ENCODE measurements at regions of chr1 and their contacts with region 1.

Region 1: DNA sequence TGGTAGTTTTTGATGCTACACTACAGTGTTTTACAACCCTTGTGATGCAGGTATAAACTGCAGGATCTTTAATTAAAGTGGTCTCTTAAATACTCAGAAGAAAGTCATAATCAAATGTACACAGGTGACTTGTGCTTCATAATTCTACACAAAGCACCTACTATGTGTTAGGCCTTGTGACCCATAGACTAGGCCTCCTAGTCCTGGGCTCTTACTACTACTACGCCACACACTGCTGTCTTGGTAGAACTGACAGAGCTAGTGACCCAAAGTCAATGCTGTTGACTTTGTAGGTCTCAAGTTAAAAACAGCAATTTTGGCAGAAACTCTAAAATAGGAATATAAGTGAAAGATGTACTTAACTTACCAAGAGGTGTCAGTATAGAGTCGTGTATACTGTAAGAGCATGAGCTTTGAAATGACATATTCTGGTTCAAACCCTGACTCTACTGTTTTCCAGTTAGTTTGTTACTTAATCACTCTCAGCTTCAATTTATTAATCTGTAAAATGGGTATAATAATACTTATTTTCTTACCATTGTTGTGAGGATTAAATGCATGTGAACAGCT is 48.6 kb upstream of the LMO4 start:
- DNase-seq: peak; percentile 45
- ATAC-seq: peak; percentile 37; the same call in 1 of the 2 replicates
- H3K4me3 ChIP-seq: no peak overlapping the region
- H3K27ac ChIP-seq: no peak overlapping the region
- H3K4me1 ChIP-seq: no peaks in the 10 kb centered on the region
- H3K27me3 ChIP-seq: no peaks in the 10 kb centered on the region
- CTCF ChIP-seq: peak; percentile 61

Region 2: GRCh38 chr1:87131809-87132283 is 148.2 kb before region 1 on chr1:
- CTCF ChIA-PET with region 1: no interaction called
- POLR2A ChIA-PET with region 1: no interaction called
- intact Hi-C with region 1: loop called (anchors 5 kb)
- DNase-seq: peak; percentile 79
- ATAC-seq: peak; percentile 99
- H3K4me3 ChIP-seq: peak overlapping the region; percentile 64
- H3K27ac ChIP-seq: no peak overlapping the region
- H3K4me1 ChIP-seq: no peaks in the 10 kb centered on the region
- H3K27me3 ChIP-seq: no peaks in the 10 kb centered on the region
- CTCF ChIP-seq: peak; percentile 94

Region 3: GRCh38 chr1:87299661-87300060 is 19.6 kb after region 1 on chr1:
- CTCF ChIA-PET with region 1: interaction called, 10 read pairs
- POLR2A ChIA-PET with region 1: no interaction called
- intact Hi-C with region 1: no loop called
- DNase-seq: no peak
- ATAC-seq: no peak
- H3K4me3 ChIP-seq: no peak overlapping the region
- H3K27ac ChIP-seq: no peak overlapping the region
- H3K4me1 ChIP-seq: no peaks in the 10 kb centered on the region
- H3K27me3 ChIP-seq: no peaks in the 10 kb centered on the region
- CTCF ChIP-seq: no peak

Region 4: DNA sequence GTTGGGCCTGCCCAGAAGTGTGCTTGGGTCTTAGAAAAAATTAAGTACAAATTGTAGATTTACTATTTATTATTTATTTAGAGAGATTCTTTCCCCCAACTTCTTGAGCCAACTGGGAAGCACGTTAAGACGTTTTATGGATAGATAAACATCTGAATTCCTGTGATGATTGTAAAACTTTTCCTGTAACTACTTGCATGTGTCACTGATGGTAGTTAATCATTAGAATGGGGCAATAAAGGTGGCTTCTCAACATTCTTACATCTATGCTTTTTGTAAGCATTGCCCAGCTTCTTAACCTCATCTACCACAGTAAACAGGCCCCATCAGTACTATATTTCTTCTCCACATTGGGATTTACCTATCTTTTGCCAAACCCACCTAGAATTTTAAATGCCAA is 608.4 kb after region 1 on chr1:
- CTCF ChIA-PET with region 1: interaction called, 11 read pairs
- POLR2A ChIA-PET with region 1: no interaction called
- intact Hi-C with region 1: no loop called
- DNase-seq: peak; percentile 63
- ATAC-seq: peak; percentile 79
- H3K4me3 ChIP-seq: no peak overlapping the region
- H3K27ac ChIP-seq: peak overlapping the region; percentile 18; the same call in 1 of the 2 replicates
- H3K4me1 ChIP-seq: peaks cover 16% of the 10 kb centered on the region
- H3K27me3 ChIP-seq: no peaks in the 10 kb centered on the region
- CTCF ChIP-seq: no peak

Region 5: DNA sequence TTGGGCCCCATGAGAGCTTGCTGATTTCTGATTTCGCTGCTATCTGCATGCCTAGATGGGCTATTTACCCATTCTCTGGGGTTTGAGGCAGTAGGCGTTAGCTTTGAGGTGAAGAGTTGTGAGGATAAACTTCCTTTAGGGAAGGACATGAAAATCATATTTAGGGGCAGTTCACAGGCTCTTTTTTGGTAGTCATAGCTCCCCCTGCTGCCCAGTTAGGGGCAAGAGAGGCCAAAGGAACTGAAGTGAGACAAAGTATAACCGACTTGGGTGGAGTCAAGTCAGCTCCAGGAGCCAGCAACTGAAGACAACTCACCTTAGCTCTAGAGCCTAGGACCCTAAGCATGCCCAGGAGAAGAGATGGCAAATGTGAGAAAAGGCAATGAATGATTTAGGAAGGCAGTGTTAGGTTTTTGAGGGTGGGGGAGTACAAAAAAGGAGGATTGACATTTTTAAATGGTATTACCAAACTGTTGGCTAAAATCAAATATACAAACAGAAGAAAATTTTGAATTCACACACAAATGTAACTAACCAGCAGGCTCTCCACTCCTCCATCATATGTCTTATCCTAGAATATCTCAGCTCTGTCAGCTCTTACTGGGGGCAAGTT is 673.8 kb after region 1 on chr1:
- CTCF ChIA-PET with region 1: no interaction called
- POLR2A ChIA-PET with region 1: no interaction called
- intact Hi-C with region 1: no loop called
- DNase-seq: peak; percentile 79
- ATAC-seq: peak; percentile 60
- H3K4me3 ChIP-seq: no peak overlapping the region
- H3K27ac ChIP-seq: no peak overlapping the region
- H3K4me1 ChIP-seq: peaks cover 28% of the 10 kb centered on the region
- H3K27me3 ChIP-seq: no peaks in the 10 kb centered on the region
- CTCF ChIP-seq: peak; percentile 92

Measured in PC-3 (cell line).